Body of pancreas (tissue), 4 donors: ENCODE measurements at regions of chr6 and their contacts with region 1.

Region 1: GRCh38 chr6:10747251-10747972 is at the start of gene TMEM14B:
- DNase-seq: peak; percentile 100
- ATAC-seq: peak; percentile 98
- H3K4me3 ChIP-seq: peak within 1 kb of the TSS; percentile 21 to 44
- H3K27ac ChIP-seq: peak within 1 kb of the TSS; percentile 47 to 82 (median 72)
- H3K4me1 ChIP-seq: peaks cover 28% of the 10 kb centered on the region
- H3K27me3 ChIP-seq: no peaks in the 10 kb centered on the region
- CTCF ChIP-seq: peak in 1 of 7 experiments; percentile 23
- POLR2A ChIP-seq: peak; percentile 64 to 92 (median 91)
- total RNA-seq, gene TMEM14B: 49.3 to 49.4 TPM

Region 2: DNA sequence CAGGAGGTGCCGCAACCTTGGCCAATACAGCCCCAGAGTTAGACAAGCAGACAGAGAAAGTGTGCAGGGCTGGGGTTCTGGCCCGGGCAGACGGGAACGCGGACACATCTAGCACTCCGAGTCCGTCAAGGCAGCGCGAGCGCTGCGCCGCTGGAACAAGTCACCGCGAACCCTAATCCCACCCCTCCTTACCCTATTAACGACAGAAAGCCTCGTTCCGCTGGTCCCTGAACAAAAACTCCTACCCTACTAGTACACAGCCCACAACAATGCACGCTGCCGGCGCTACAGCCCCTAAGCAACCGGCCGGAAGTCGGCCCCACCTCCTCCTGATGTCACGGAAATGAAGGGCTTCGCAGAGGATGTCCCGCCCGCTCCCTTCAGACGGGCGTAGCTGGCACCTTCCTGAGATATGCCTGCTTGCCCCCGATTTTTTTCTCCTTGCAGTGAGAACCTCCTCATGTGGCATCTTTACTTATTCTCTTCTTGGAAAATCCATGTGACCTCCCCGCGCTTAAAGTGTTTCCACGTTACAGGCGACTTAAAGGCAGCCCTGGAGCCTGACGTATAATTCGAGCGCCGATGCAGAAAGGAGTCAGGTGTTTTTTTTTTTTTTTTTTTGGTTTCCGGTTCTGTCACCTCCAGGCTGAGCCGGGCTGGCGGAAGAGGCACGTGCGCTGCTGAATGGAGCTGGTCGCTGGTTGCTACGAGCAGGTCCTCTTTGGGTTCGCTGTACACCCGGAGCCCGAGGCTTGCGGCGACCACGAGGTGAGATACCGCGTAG is 52.9 kb before region 1 on chr6 and contains the starts of genes C6orf52 and PAK1IP1:
- intact Hi-C with region 1: loop called (anchors 10 kb)
- DNase-seq: peak; percentile 91 to 94 (median 93)
- ATAC-seq: peak; percentile 99
- H3K4me3 ChIP-seq: peak within 1 kb of the TSS; percentile 64 to 73
- H3K27ac ChIP-seq: peak within 1 kb of the TSS; percentile 85 to 97 (median 92)
- H3K4me1 ChIP-seq: peaks cover 27% of the 10 kb centered on the region
- H3K27me3 ChIP-seq: no peaks in the 10 kb centered on the region
- CTCF ChIP-seq: peak in 1 of 7 experiments; percentile 3
- POLR2A ChIP-seq: peak; percentile 52 to 96 (median 94)
- total RNA-seq, gene C6orf52: not detected
- total RNA-seq, gene PAK1IP1: 2.1 to 8.6 TPM

Region 3: GRCh38 chr6:10801536-10801848 is 54.1 kb after region 1 on chr6:
- intact Hi-C with region 1: no loop called
- DNase-seq: no peak
- ATAC-seq: no peak
- H3K4me3 ChIP-seq: no peak overlapping the region
- H3K27ac ChIP-seq: no peak overlapping the region
- H3K4me1 ChIP-seq: no peaks in the 10 kb centered on the region
- H3K27me3 ChIP-seq: no peaks in the 10 kb centered on the region
- CTCF ChIP-seq: peak in 1 of 7 experiments; percentile 7
- POLR2A ChIP-seq: no peak